Vagina (tissue), 2 donors: ENCODE measurements at regions of chr9 and their contacts with region 1.

Region 1: GRCh38 chr9:13705918-13706317 is 426.4 kb upstream of the MPDZ start:
- DNase-seq: peak in 1 of 2 donors; percentile 93
- H3K4me3 ChIP-seq: no peak overlapping the region
- H3K27ac ChIP-seq: no peak overlapping the region
- H3K4me1 ChIP-seq: no peaks in the 10 kb centered on the region
- H3K27me3 ChIP-seq: no peaks in the 10 kb centered on the region
- CTCF ChIP-seq: no peak
- POLR2A ChIP-seq: no peak

Region 2: GRCh38 chr9:13485068-13485596 is 220.8 kb before region 1 on chr9:
- intact Hi-C with region 1: loop called (anchors 5 kb)
- DNase-seq: no peak
- H3K4me3 ChIP-seq: no peak overlapping the region
- H3K27ac ChIP-seq: no peak overlapping the region
- H3K4me1 ChIP-seq: peaks cover 9% of the 10 kb centered on the region
- H3K27me3 ChIP-seq: no peaks in the 10 kb centered on the region
- CTCF ChIP-seq: peak in 1 of 3 experiments; percentile 13
- POLR2A ChIP-seq: no peak

Region 3: GRCh38 chr9:13942695-13943094 is 236.8 kb after region 1 on chr9:
- intact Hi-C with region 1: no loop called
- DNase-seq: no peak
- H3K4me3 ChIP-seq: no peak overlapping the region
- H3K27ac ChIP-seq: no peak overlapping the region
- H3K4me1 ChIP-seq: no peaks in the 10 kb centered on the region
- H3K27me3 ChIP-seq: no peaks in the 10 kb centered on the region
- CTCF ChIP-seq: no peak
- POLR2A ChIP-seq: no peak